Endothelial cell of umbilical vein (primary cell): ENCODE measurements at regions of chr13 and their contacts with region 1.

Region 1: GRCh38 chr13:21256351-21256761 is 79.9 kb downstream of the MRPL57 start:
- DNase-seq: no peak
- H3K4me3 ChIP-seq: no peak overlapping the region
- H3K27ac ChIP-seq: no peak overlapping the region
- H3K4me1 ChIP-seq: no peaks in the 10 kb centered on the region
- H3K27me3 ChIP-seq: peaks cover 1 to 9% of the 10 kb centered on the region in 2 experiments
- CTCF ChIP-seq: no peak
- POLR2A ChIP-seq: no peak

Region 2: GRCh38 chr13:20118268-20119140 is 1137.9 kb before region 1 on chr13:
- CTCF ChIA-PET with region 1: no interaction called
- POLR2A ChIA-PET with region 1: no interaction called
- dilution Hi-C with region 1: no loop called
- intact Hi-C with region 1: loop called (anchors 5 kb)
- DNase-seq: peak; percentile 39
- H3K4me3 ChIP-seq: peak overlapping the region; percentile 62 to 74 (median 71)
- H3K27ac ChIP-seq: peak overlapping the region; percentile 26
- H3K4me1 ChIP-seq: peaks cover 2% of the 10 kb centered on the region
- H3K27me3 ChIP-seq: peaks cover 1 to 3% of the 10 kb centered on the region in 2 experiments
- CTCF ChIP-seq: no peak
- POLR2A ChIP-seq: no peak